GM18951 (cell line): ENCODE measurements at regions of chr1 and their contacts with region 1.

Region 1: DNA sequence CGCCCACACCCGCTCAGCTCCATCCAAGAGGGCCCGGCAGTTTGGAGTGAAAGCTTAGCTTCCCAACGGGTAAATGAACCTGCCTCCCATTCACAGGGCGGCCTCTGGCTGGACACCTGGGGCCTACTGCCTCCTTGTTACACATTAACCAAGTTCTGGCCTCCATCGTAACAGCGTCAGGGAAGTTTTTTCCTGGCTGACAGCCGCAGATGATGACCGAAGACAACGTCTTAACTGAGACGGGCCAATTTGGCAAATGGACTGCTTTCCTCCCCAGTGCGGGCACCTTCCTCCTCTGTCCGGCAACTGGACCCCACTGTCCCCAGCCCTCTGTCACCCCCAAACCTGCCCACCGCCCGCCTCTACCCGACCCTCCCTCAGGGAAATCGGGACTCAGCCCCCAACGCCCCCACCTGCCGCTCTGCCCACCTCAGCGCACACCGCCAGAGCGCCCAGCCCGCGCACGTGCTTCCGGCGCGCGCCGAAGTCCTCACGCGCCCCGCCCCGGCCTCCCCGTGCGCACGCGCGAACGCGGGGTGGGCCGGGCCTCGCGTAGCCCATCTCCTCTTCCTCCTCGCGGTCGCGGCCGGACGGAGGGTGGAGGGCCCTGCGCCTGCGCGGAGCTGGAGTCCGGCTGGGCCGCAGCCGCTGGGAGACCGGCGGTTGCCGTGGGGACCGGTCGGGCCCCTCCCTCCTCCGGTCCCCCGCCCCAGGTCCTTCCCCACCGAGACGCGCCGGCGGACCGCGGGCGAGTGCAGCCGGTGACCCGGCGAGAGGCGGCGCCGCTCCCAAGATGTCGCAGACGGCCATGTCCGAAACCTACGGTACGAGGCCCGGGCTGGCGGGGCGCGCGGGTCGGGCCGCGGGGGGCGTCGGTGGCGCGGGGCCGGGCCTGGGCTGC is at the start of gene RAB4A:
- POLR2A ChIP-seq: peak; percentile 81

Region 2: DNA sequence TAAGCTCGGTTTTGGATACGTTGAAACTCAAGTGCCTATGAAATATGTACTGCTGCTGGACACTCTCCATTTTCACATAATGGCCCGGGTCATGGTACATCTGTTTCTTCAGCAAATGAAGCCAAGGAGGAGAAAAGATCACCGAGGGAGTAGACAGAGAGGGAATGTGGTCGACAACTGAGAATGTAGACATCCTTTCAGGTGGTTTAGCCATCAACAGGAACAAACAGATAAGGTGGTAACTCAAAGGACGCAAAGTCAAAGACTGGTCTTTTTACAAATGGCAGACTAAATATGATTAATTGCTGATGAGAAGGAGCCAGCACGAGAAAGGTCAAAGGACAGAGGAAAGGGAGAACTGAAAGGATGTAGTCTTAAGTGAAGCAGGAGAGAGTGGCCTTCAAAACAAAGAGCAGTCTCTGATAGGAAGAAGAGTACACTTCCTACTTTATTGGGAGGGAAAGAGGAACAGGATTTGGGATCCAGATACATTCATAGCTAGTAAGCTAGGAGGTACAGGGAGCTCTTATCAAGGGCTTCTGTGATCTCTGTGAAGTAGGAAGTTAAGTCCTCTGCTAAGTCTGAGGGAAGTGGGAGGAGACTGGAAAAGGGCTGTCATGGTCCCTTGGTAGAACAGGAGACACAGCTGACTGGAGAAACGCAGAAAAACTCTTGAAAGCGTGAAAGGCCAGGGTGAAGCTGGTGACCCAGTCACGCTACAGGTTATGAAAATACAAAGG is 209.0 kb after region 1 on chr1:
- in situ Hi-C with region 1: loop called (anchors 10 kb)
- POLR2A ChIP-seq: no peak

Region 3: GRCh38 chr1:230310381-230311163 is 1039.8 kb after region 1 on chr1:
- in situ Hi-C with region 1: loop called (anchors 25 kb)
- POLR2A ChIP-seq: no peak